ENCODE measurements at regions of chr10 and their contacts with region 1.

Region 1: GRCh38 chr10:114103284-114103683 is 59.6 kb downstream of the ADRB1 start:
- DNase-seq: no peak
- ATAC-seq: peak; percentile 80

Region 2: GRCh38 chr10:113704637-113705343 is 398.5 kb before region 1 on chr10:
- intact Hi-C with region 1: loop called (anchors 5 to 10 kb)
- DNase-seq: no peak
- ATAC-seq: peak; percentile 63

Region 3: GRCh38 chr10:113802997-113803396 is 300.3 kb before region 1 on chr10:
- intact Hi-C with region 1: loop called in 1 of 2 experiments (anchors 2 kb)
- DNase-seq: no peak
- ATAC-seq: no peak

Region 4: GRCh38 chr10:113891476-113891875 is 211.8 kb before region 1 on chr10:
- intact Hi-C with region 1: no loop called
- DNase-seq: no peak
- ATAC-seq: peak; percentile 40

Measured in left colon (tissue), 2 donors.